ENCODE measurements at regions of chr10 and their contacts with region 1.

Region 1: DNA sequence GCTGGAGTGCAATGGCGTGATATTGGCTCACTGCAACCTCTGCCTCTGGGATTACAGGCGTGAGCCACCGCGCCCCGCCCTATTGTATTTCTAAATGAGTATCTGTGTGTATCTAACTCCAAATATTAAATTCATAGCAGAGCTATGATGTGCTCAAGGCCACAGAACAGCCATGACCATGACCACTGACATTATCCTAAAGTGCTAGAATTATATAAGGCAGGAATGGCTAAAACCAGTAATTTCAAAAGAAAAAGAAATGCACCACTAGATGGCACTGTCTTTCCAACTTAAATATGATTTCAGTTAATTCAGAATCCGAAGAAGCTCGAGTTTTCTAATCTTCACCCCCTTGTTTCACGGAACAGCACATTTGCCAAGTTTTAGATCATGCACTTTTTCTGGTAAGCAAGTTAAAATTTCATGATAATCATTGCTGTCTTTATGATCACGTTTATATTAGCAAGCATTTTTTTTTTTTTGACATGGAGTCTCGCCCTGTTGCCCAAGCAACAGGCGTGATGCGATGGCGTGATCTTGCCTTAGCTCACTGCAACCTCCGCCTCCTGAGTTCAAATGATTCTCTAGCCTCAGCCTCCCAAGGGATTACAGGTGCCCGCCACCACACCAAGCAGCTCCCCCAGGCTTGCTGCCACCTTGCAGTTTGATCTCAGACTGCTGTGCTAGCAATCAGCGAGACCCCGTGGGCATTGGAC is 65.3 kb downstream of the OR13A1 start:
- DNase-seq: peak; percentile 81

Region 2: GRCh38 chr10:45433716-45434469 is 183.8 kb after region 1 on chr10:
- in situ Hi-C with region 1: loop called (anchors 25 kb)
- DNase-seq: no peak

Region 3: GRCh38 chr10:46228563-46229071 is 978.5 kb after region 1 on chr10:
- in situ Hi-C with region 1: loop called (anchors 25 kb)
- DNase-seq: peak; percentile 67

Measured in KBM-7 (cell line).